ENCODE measurements at regions of chr12 and their contacts with region 1.

Region 1: DNA sequence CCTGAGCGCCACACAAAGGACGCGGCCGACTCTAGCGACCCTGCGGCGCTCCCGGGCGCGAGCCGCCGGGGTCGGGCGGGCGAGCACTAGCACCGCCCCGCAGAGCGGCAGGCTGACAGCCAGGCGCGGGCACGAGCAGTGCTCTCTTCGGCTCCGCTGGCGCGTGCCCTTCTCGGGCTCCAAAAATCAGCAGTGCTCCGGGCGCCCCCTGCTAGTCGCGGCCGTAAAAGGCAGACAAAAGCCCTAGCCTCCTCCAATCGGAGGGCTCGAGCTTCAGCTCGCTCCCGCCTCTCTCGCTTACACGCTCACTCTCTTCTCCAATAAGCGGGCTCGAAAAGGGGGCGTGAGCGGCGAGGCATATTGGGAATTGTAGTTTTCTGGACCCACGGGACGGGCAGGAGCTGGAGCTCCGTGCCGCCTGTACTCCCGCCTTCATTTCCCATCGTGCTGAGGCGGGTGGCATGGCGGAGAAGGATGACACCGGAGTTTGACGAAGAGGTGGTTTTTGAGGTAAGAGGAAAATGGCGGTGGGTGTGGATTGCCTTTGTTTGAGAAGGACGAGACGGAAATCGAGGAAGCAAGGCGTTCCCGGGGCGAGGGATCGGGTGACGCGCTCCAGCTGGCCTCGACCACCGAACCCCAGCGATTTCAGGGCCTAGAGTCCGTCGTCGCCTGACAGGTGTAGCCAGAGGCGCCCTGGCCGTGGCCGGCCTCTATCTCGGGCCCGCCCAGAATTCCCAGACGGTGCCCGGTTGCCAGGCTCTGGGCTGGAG is at the starts of genes FGD6 and VEZT:
- DNase-seq: peak; percentile 99 to 100
- H3K4me3 ChIP-seq: peak within 1 kb of the TSS; percentile 81
- CTCF ChIP-seq: peak in 1 of 3 donors; percentile 18
- POLR2A ChIP-seq: peak in 1 of 2 donors; percentile 30
- total RNA-seq, gene FGD6: 13.9 to 19.1 (median 14.7) TPM
- total RNA-seq, gene VEZT: 40.6 to 95.9 (median 46.4) TPM

Region 2: DNA sequence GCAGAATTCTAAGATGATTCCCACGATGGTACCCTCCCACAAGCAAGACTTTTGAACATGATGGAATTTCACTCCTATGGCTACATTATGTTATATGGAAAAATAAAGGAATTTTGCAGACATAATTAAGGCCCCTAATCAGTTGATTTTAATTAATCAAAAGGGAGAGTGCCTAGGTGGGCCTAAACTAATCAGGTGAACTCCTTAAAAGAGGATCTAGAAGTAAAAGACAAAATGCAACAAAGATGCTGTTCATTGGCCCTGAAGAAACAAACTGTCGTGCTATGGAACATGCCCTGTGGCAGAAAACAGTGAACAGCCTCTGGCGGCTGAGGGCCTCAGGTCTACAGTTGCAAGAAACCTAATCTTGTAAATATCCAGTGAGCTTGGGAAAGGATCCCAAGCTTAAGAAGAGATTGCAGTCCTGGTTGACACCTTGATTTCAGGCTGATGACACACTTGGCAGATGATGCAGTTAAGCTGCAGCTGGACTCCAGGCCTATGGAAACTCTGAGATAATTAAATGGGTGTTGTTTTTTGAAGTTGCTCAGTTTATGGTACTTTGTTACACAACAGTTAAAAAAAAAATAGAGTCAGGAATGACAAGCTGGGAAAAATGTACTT is 581.0 kb before region 1 on chr12:
- intact Hi-C with region 1: loop called (anchors 5 kb)
- DNase-seq: no peak
- H3K4me3 ChIP-seq: no peak overlapping the region
- CTCF ChIP-seq: no peak
- POLR2A ChIP-seq: no peak

Region 3: GRCh38 chr12:95959107-95959506 is 741.5 kb after region 1 on chr12:
- intact Hi-C with region 1: no loop called
- DNase-seq: no peak
- H3K4me3 ChIP-seq: no peak overlapping the region
- CTCF ChIP-seq: no peak
- POLR2A ChIP-seq: no peak

Measured in lower leg skin (tissue), 4 donors.